Activated CD8-positive, alpha-beta T cell treated with anti-CD3 and anti-CD28 coated beads, Interleukin-2, amount 10 ng/mL, durations not matched to agents 7 days and 5 days (primary cell): ENCODE measurements at regions of chr20 and their contacts with region 1.

Region 1: DNA sequence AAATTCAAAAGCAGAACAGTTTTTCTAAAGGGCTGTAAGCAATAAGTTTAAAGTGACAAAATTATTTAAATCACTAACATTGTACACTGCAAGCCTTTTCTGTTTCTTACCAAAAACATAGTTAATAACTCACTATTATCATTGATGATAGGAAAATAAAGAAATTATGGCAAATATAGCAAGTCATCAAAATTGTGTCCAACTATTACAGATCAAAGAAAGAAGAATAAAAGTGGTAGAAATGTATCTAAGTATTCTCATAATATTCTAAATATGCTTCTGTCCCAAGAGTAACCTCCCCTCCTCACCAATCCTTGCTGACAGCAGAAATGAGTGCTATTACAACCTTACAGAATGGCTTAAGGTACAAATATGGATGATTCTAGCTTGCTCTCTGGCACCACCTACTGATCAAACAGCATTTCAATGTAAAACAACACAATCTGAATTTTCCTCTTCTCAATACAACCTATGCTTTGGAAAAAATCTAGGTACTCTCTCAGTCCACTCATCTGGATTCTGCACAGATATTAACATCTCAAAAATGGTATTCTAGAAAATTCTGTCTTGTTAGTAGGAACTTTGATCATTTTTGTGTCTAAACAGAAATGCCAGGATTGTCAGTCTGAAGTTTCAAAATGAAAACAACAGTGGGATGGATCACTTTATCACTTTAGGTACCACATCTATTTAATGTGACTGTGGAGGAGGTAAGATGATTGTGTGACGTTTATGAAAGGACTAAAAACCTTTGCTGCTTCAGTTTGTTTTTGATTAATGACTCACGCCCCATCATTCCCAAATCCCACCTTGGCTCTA is 40.9 kb downstream of the ZFP64 start:
- DNase-seq: peak; percentile 48
- ATAC-seq: no peak
- H3K4me3 Mint-ChIP-seq: no peak overlapping the region
- H3K27ac Mint-ChIP-seq: no peak overlapping the region
- H3K4me1 Mint-ChIP-seq: no peaks in the 10 kb centered on the region
- H3K27me3 Mint-ChIP-seq: no peaks in the 10 kb centered on the region

Region 2: GRCh38 chr20:52127309-52127708 is 23.3 kb before region 1 on chr20:
- CTCF ChIA-PET with region 1: interaction called, 13 read pairs
- POLR2A ChIA-PET with region 1: no interaction called
- DNase-seq: no peak
- ATAC-seq: no peak
- H3K4me3 Mint-ChIP-seq: no peak overlapping the region
- H3K27ac Mint-ChIP-seq: no peak overlapping the region
- H3K4me1 Mint-ChIP-seq: no peaks in the 10 kb centered on the region
- H3K27me3 Mint-ChIP-seq: no peaks in the 10 kb centered on the region

Region 3: DNA sequence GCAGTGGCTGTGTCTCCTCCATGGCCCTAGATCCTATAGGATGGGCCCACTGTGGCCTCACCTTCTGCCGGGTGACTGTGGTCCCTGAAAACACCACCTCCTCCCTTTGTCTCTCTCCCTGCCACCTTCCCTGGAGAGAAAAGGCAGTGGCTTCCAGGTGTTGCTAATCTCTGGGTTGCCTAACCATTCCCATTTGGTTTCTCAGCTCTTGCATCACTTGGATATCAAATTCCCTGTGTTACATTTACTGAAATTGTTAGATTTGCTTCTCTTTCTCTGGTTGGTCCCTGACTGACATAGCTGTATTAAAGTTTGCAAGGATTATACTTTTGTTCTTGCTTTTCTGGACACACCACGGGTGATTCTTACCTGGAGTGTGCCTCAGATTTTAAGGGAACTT is 50.2 kb after region 1 on chr20:
- CTCF ChIA-PET with region 1: no interaction called
- POLR2A ChIA-PET with region 1: no interaction called
- DNase-seq: no peak
- ATAC-seq: no peak
- H3K4me3 Mint-ChIP-seq: no peak overlapping the region
- H3K27ac Mint-ChIP-seq: no peak overlapping the region
- H3K4me1 Mint-ChIP-seq: no peaks in the 10 kb centered on the region
- H3K27me3 Mint-ChIP-seq: no peaks in the 10 kb centered on the region